ENCODE measurements at regions of chr3 and their contacts with region 1.

Region 1: GRCh38 chr3:28241221-28242160 is at the start of gene CMC1:
- DNase-seq: peak; percentile 98
- H3K4me3 ChIP-seq: peak within 1 kb of the TSS; percentile 67 to 98 (median 82)
- H3K27ac ChIP-seq: peak within 1 kb of the TSS; percentile 75 to 86 (median 80)
- H3K4me1 ChIP-seq: peaks cover 0 to 21% (median 18%) of the 10 kb centered on the region in 4 donors
- H3K27me3 ChIP-seq: no peaks in the 10 kb centered on the region
- CTCF ChIP-seq: no peak
- EP300 ChIP-seq: peak in 1 of 4 donors; percentile 22
- POLR2A ChIP-seq: peak; percentile 65 to 80
- total RNA-seq, gene CMC1: 6.1 to 16.9 (median 10.1) TPM

Region 2: GRCh38 chr3:26920634-26921033 is 1320.9 kb before region 1 on chr3:
- intact Hi-C with region 1: no loop called
- DNase-seq: no peak
- H3K4me3 ChIP-seq: no peak overlapping the region
- H3K27ac ChIP-seq: peak overlapping the region in 2 of 4 donors; percentile 31 to 45
- H3K4me1 ChIP-seq: peaks cover 0 to 14% (median 9%) of the 10 kb centered on the region in 4 donors
- H3K27me3 ChIP-seq: no peaks in the 10 kb centered on the region
- CTCF ChIP-seq: no peak
- EP300 ChIP-seq: no peak
- POLR2A ChIP-seq: no peak

Region 3: DNA sequence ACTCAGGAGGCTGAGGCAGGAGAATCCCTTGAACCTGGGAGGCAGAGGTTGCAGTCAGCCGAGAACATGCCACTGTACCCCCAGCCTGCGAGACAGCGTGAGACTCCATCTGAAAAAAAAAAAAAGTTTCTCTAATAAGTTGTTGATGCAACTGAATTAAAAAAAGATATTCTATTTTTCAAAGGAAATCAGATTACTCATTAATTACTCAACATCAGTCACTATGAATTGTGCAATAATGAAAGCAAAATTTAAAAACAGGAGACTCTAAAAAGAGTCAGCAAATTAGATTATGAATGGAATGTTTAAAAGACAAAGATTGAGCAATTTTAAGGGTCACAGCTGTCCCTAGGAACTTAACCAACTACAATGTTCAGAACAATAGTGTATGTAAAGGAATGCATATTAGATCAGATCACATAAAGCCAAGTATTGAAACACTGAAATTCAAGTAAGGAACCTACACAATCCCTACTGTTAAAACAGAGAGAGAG is 697.1 kb before region 1 on chr3:
- intact Hi-C with region 1: no loop called
- DNase-seq: no peak
- H3K4me3 ChIP-seq: no peak overlapping the region
- H3K27ac ChIP-seq: peak overlapping the region in 1 of 4 donors; percentile 25
- H3K4me1 ChIP-seq: no peaks in the 10 kb centered on the region
- H3K27me3 ChIP-seq: no peaks in the 10 kb centered on the region
- CTCF ChIP-seq: no peak
- EP300 ChIP-seq: no peak
- POLR2A ChIP-seq: no peak

Region 4: GRCh38 chr3:28348629-28349483 is 107.4 kb after region 1 on chr3 and contains the starts of genes AZI2 and ZCWPW2:
- intact Hi-C with region 1: loop called (anchors 5 kb)
- DNase-seq: peak; percentile 98
- H3K4me3 ChIP-seq: peak within 1 kb of the TSS; percentile 60 to 88 (median 77)
- H3K27ac ChIP-seq: peak within 1 kb of the TSS; percentile 95 to 99 (median 98)
- H3K4me1 ChIP-seq: peaks cover 0 to 52% (median 25%) of the 10 kb centered on the region in 4 donors
- H3K27me3 ChIP-seq: no peaks in the 10 kb centered on the region
- CTCF ChIP-seq: peak in 1 of 4 experiments; percentile 18
- EP300 ChIP-seq: peak in 1 of 4 donors; percentile 24
- POLR2A ChIP-seq: peak; percentile 63 to 78
- total RNA-seq, gene AZI2: 54.0 to 87.0 (median 63.7) TPM
- total RNA-seq, gene ZCWPW2: 1.2 to 6.4 (median 3.0) TPM